ENCODE measurements at regions of chr2 and their contacts with region 1.

Region 1: GRCh38 chr2:72993147-72993932 is 76.0 kb downstream of the EMX1 start:
- DNase-seq: no peak
- H3K4me3 ChIP-seq: no peak overlapping the region
- H3K27me3 ChIP-seq: no peaks in the 10 kb centered on the region
- CTCF ChIP-seq: peak; percentile 71

Region 2: GRCh38 chr2:72780477-72780876 is 212.9 kb before region 1 on chr2:
- CTCF ChIA-PET with region 1: no interaction called
- POLR2A ChIA-PET with region 1: no interaction called
- DNase-seq: no peak
- H3K4me3 ChIP-seq: no peak overlapping the region
- H3K27me3 ChIP-seq: no peaks in the 10 kb centered on the region
- CTCF ChIP-seq: no peak

Region 3: DNA sequence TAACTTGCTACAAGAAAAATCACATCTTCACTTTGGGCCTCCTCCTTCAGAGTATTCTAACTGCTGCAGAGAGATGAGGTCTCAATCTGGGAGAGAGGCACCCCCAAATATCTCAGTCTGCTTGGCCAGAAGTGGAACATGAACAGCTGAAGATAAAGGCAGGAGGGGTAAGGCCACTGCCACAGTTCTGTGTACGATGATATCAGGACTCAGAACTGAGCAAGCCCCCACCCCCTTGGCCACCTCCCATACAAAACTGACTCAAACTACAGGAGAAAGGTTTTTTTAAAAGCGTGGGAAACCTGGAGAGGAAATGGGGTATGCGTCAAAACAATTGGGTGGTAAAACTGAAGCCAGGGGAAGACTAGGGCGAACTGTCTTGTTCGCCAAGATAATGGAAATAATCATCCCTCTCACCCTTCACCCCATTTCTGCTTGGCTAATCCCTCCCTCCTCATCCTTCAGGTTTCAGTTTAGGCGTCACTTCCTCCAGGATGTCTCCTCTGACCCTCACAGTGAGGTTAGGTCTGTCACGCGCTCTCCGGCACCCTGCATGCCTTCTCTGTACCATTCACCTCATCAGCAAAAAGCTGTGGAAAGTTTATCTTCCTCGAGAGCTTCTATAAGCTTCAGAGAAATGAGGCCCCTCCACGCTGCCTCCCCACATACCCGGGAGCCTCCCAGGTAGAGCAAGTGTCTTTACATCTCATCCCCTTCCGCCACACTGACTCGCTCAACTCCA is 13.8 kb after region 1 on chr2:
- CTCF ChIA-PET with region 1: interaction called, 11 read pairs
- POLR2A ChIA-PET with region 1: no interaction called
- DNase-seq: no peak
- H3K4me3 ChIP-seq: no peak overlapping the region
- H3K27me3 ChIP-seq: no peaks in the 10 kb centered on the region
- CTCF ChIP-seq: no peak

Region 4: GRCh38 chr2:73013936-73014335 is 20.6 kb after region 1 on chr2:
- CTCF ChIA-PET with region 1: interaction called, 11 read pairs
- POLR2A ChIA-PET with region 1: no interaction called
- DNase-seq: no peak
- H3K4me3 ChIP-seq: no peak overlapping the region
- H3K27me3 ChIP-seq: no peaks in the 10 kb centered on the region
- CTCF ChIP-seq: no peak

Region 5: DNA sequence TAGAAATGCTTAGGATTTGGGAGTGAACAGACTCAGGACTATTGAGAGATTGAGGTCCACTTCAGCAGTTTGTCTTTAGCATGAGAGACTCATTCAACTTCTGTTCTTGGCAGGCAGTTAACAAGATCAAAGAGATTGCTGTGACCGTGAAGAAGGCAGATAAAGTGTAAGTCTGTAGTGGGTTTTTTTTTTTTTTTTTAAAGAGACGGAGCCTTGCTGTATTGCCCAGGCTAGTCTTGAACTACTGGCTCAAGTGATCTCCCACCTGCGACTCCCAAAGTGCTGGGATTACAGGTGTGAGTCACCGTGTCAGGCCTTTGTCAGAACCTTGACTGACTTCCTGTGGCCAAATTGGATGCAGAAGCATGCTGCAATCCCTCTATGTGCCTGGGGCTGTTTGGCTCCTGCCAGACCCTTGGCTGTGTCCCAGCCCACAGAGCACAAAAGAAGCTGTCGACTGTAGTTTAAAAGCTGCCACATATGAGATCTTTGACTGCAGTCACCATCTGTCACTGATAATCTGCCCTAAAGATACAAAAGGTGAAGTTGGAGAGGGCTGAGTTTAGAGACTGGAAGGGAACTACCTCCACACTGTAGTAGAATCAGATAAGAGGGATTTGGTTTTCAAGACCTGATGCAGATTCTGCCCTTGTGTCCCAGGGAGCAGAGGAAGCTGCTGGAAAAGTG is 250.7 kb after region 1 on chr2:
- CTCF ChIA-PET with region 1: no interaction called
- POLR2A ChIA-PET with region 1: no interaction called
- DNase-seq: peak; percentile 29
- H3K4me3 ChIP-seq: no peak overlapping the region
- H3K27me3 ChIP-seq: no peaks in the 10 kb centered on the region
- CTCF ChIP-seq: no peak

Measured in BJ (cell line).